B cell (primary cell): ENCODE measurements at regions of chr16 and their contacts with region 1.

Region 1: DNA sequence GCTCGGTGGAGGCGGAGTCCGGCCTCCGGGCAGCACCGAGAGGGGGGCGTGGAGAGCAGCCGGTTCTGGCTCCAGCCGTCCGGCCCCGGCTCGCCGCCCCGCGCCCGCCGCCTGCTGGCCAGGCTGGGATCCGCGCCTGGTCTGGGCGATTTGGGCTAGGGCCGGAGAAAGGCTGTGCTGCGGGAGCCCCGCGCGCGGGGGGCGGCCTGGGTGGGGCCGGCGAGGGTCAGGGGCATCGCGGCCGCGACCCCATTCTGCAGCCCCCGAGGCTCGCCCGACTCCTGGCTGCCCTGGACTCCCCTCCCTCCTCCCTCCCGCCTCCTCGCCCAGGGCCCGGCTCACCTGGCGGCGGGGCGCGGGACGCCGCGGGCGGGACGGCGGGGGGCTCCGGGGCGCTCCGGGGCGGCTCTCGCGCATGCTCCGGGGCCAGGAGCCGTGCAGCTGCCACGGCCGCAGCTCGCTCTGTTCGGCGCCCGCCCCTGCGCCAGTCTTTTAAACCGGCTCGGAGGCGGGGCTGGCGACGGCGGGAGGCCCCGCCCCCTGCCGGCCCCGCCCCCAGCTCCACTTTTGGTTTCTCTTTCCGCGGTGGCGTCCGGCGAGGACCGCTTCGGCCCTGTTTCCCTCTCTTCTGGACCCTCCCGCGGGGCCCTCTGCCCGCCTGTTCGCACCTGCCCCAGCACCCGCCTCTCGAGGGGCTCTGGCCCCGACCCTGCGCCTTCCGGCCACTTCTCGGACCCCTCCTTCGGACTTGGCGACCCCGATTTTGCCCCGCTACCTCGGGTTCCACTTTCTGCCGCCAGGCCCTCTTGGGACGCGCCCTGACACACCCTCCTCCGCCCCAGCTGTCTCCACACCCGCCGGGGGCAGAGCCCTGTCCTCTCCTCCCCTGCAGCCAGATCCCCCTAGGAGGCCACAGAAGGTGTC is at the start of gene SOCS1:
- DNase-seq: peak; percentile 92
- ATAC-seq: peak; percentile 70
- H3K4me3 ChIP-seq: peak within 1 kb of the TSS; percentile 65 to 90 (median 72)
- H3K4me3 Mint-ChIP-seq: peak within 1 kb of the TSS; percentile 99
- H3K27ac ChIP-seq: peak within 1 kb of the TSS; percentile 86 to 90
- H3K27ac Mint-ChIP-seq: peak within 1 kb of the TSS; percentile 99
- H3K4me1 ChIP-seq: peaks cover 50 to 62% of the 10 kb centered on the region in 2 donors
- H3K4me1 Mint-ChIP-seq: peaks cover 53% of the 10 kb centered on the region
- H3K27me3 ChIP-seq: no peaks in the 10 kb centered on the region
- H3K27me3 Mint-ChIP-seq: no peaks in the 10 kb centered on the region
- CTCF ChIP-seq: peak; percentile 86
- total RNA-seq, gene SOCS1: 107 TPM in 2 replicates

Region 2: GRCh38 chr16:10743610-10744393 is 512.2 kb before region 1 on chr16 and contains the start of gene NUBP1:
- CTCF ChIA-PET with region 1: no interaction called
- POLR2A ChIA-PET with region 1: no interaction called
- intact Hi-C with region 1: loop called (anchors 5 kb)
- DNase-seq: peak; percentile 100
- ATAC-seq: peak; percentile 93
- H3K4me3 ChIP-seq: peak within 1 kb of the TSS; percentile 61 to 85 (median 73)
- H3K4me3 Mint-ChIP-seq: peak within 1 kb of the TSS; percentile 93
- H3K27ac ChIP-seq: peak within 1 kb of the TSS; percentile 93 to 97
- H3K27ac Mint-ChIP-seq: peak within 1 kb of the TSS; percentile 97
- H3K4me1 ChIP-seq: peaks cover 31 to 37% of the 10 kb centered on the region in 2 donors
- H3K4me1 Mint-ChIP-seq: peaks cover 55% of the 10 kb centered on the region
- H3K27me3 ChIP-seq: no peaks in the 10 kb centered on the region
- H3K27me3 Mint-ChIP-seq: no peaks in the 10 kb centered on the region
- CTCF ChIP-seq: no peak
- total RNA-seq, gene NUBP1: 54.3 and 67.3 TPM in 2 replicates

Region 3: DNA sequence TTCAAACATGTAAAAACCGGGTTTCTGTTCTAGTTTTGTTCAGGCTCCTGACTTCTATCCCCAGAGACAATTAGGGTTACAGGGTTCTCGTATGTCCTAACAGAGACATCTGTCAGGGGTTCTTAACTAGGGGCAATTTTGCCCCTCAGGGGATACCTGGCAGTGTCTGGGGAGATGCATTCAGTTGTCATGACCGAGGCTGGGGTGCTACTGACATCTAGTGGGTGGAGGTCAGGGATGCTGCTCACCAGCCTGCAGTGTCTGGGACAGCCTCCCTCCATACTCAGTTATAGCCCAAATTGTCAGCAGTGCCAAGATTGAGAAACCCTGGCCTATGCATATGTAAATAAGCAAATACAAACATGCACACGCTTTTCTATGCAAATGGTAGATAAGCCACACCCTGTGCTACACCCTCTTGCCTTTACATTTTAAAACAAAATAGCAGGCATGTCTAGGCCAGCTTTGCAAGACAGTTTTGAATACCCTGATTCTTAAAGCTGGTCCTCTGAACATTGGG is 274.2 kb before region 1 on chr16:
- CTCF ChIA-PET with region 1: interaction called, 27 read pairs
- POLR2A ChIA-PET with region 1: interaction called, 4 read pairs
- intact Hi-C with region 1: no loop called
- DNase-seq: peak; percentile 73
- ATAC-seq: peak; percentile 93
- H3K4me3 ChIP-seq: no peak overlapping the region
- H3K4me3 Mint-ChIP-seq: peak overlapping the region; percentile 82
- H3K27ac ChIP-seq: peak overlapping the region in 1 of 2 donors; percentile 10
- H3K27ac Mint-ChIP-seq: peak overlapping the region; percentile 84
- H3K4me1 ChIP-seq: peaks cover 4 to 22% of the 10 kb centered on the region in 2 donors
- H3K4me1 Mint-ChIP-seq: peaks cover 39% of the 10 kb centered on the region
- H3K27me3 ChIP-seq: no peaks in the 10 kb centered on the region
- H3K27me3 Mint-ChIP-seq: no peaks in the 10 kb centered on the region
- CTCF ChIP-seq: peak; percentile 66

Region 4: DNA sequence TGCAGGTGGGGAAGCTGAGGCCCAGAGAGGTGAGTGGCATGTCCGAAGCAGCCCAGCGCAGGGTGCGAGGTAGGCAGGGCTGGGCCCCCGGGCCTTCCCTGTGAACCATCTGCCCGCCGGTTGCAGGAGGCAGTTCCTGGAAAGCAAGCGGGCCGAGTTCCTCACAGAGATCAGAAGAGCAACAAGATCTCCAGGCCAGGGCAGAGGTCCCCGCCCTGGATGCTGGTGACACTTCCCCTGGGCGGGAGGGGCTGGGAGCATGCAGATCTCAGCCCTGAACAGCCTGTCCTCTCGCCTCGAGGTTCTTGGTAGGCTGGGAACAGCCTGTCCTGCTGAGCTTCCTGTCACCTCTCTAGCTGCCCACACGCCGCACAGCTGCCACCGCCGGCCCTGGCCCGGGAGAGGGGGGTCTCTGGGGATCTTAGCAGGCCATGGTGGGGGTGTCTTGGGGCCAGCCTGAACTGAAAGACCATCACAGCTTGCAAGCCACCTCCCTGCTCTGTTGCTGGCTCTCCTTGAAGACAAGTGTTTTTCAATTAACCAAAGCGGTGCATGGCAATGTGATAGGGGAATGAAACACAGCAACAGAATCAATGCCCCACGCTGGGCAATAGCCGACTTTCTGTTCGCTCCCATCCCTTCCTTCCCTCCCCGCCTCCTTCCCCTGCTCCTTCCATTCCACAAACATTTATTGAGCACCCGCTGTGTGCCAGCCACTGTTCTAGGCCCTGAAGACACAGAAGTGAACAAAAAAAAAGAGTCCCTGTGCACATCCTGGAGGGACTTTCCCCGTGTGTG is 31.7 kb before region 1 on chr16:
- CTCF ChIA-PET with region 1: interaction called, 24 read pairs
- POLR2A ChIA-PET with region 1: interaction called, 19 read pairs
- intact Hi-C with region 1: loop called (anchors 1 kb)
- DNase-seq: peak; percentile 65
- ATAC-seq: peak; percentile 34
- H3K4me3 ChIP-seq: peak overlapping the region in 1 of 5 experiments; percentile 61
- H3K4me3 Mint-ChIP-seq: peak overlapping the region; percentile 83
- H3K27ac ChIP-seq: peak overlapping the region; percentile 72 to 85
- H3K27ac Mint-ChIP-seq: peak overlapping the region; percentile 93
- H3K4me1 ChIP-seq: peaks cover 28 to 31% of the 10 kb centered on the region in 2 donors
- H3K4me1 Mint-ChIP-seq: peaks cover 34% of the 10 kb centered on the region
- H3K27me3 ChIP-seq: no peaks in the 10 kb centered on the region
- H3K27me3 Mint-ChIP-seq: no peaks in the 10 kb centered on the region
- CTCF ChIP-seq: no peak

Region 5: GRCh38 chr16:11312718-11313492 is 56.9 kb after region 1 on chr16:
- CTCF ChIA-PET with region 1: interaction called, 82 read pairs
- POLR2A ChIA-PET with region 1: interaction called, 89 read pairs
- intact Hi-C with region 1: loop called (anchors 1 kb)
- DNase-seq: peak; percentile 37
- ATAC-seq: no peak
- H3K4me3 ChIP-seq: no peak overlapping the region
- H3K4me3 Mint-ChIP-seq: peak overlapping the region; percentile 48
- H3K27ac ChIP-seq: no peak overlapping the region
- H3K27ac Mint-ChIP-seq: peak overlapping the region; percentile 82
- H3K4me1 ChIP-seq: peaks cover 59 to 73% of the 10 kb centered on the region in 2 donors
- H3K4me1 Mint-ChIP-seq: peaks cover 71% of the 10 kb centered on the region
- H3K27me3 ChIP-seq: no peaks in the 10 kb centered on the region
- H3K27me3 Mint-ChIP-seq: no peaks in the 10 kb centered on the region
- CTCF ChIP-seq: no peak

Region 6: GRCh38 chr16:11356573-11357331 is 100.8 kb after region 1 on chr16:
- CTCF ChIA-PET with region 1: interaction called, 223 read pairs
- POLR2A ChIA-PET with region 1: interaction called, 39 read pairs
- intact Hi-C with region 1: loop called (anchors 1 kb)
- DNase-seq: peak; percentile 74
- ATAC-seq: peak; percentile 35
- H3K4me3 ChIP-seq: no peak overlapping the region
- H3K4me3 Mint-ChIP-seq: peak overlapping the region; percentile 16
- H3K27ac ChIP-seq: no peak overlapping the region
- H3K27ac Mint-ChIP-seq: peak overlapping the region; percentile 37
- H3K4me1 ChIP-seq: peaks cover 42 to 45% of the 10 kb centered on the region in 2 donors
- H3K4me1 Mint-ChIP-seq: peaks cover 53% of the 10 kb centered on the region
- H3K27me3 ChIP-seq: peaks cover 0 to 45% (median 25%) of the 10 kb centered on the region in 4 experiments
- H3K27me3 Mint-ChIP-seq: peaks cover 30% of the 10 kb centered on the region
- CTCF ChIP-seq: peak; percentile 68

Region 7: DNA sequence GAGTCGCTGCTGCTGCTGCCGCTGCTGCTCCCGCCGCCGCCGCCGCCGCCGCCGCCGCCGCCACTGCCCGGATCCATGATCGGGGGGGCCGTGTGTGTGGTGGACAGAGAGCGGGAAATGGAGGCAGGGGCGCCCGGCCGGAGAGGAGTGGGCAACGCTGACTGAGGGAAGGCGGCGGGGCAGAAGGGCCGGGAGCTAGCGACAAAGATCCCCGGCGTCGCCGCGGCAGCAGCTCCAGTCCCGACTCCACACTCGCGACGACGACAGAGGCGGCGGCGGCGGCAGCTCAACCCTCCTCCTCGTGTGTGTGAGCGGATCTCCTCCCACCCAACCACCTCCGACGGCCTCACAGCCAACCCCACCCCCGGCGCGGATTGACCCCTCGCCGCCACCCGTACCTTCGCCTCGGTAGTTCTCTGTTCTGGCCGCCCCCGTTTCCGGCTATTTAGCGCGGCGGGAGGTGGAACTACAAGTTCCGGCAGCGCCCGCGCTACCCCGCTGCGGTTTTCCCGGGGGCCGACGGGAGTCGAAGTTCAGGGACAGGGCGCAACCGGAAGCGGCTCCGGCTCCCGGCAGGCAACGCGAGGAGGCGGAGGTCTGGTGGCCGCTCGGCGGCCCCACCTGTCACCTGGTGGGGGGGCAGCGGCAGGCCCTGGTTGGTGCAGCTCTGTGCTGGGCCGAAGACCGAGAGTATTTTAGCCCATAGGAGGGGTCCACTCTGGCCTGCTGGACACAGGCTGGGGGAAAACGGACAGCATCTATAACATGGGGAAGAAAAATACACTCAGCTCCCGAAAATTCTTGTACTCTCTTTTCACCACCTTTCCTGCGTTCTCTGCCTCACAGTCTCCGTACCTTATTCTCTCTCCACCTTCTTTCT is 659.9 kb after region 1 on chr16 and contains the start of gene GSPT1:
- CTCF ChIA-PET with region 1: no interaction called
- POLR2A ChIA-PET with region 1: no interaction called
- intact Hi-C with region 1: loop called (anchors 10 kb)
- DNase-seq: peak; percentile 99
- ATAC-seq: peak; percentile 93
- H3K4me3 ChIP-seq: peak within 1 kb of the TSS; percentile 65 to 78 (median 76)
- H3K4me3 Mint-ChIP-seq: peak within 1 kb of the TSS; percentile 91
- H3K27ac ChIP-seq: peak within 1 kb of the TSS; percentile 72 to 82
- H3K27ac Mint-ChIP-seq: peak within 1 kb of the TSS; percentile 95
- H3K4me1 ChIP-seq: peaks cover 29 to 31% of the 10 kb centered on the region in 2 donors
- H3K4me1 Mint-ChIP-seq: peaks cover 32% of the 10 kb centered on the region
- H3K27me3 ChIP-seq: peaks cover 0 to 4% (median 0%) of the 10 kb centered on the region in 4 experiments
- H3K27me3 Mint-ChIP-seq: peaks cover 11% of the 10 kb centered on the region
- CTCF ChIP-seq: no peak
- total RNA-seq, gene GSPT1: 72.6 and 77.0 TPM in 2 replicates